Body of pancreas (tissue), 4 donors: ENCODE measurements at regions of chr19 and their contacts with region 1.

Region 1: GRCh38 chr19:4870025-4870700 is 2.7 kb upstream of the PLIN3 start:
- DNase-seq: peak; percentile 24 to 75 (median 40)
- ATAC-seq: no peak
- H3K4me3 ChIP-seq: no peak overlapping the region
- H3K27ac ChIP-seq: peak overlapping the region in 1 of 4 donors; percentile 2
- H3K4me1 ChIP-seq: peaks cover 9% of the 10 kb centered on the region
- H3K27me3 ChIP-seq: no peaks in the 10 kb centered on the region
- CTCF ChIP-seq: no peak
- POLR2A ChIP-seq: no peak

Region 2: DNA sequence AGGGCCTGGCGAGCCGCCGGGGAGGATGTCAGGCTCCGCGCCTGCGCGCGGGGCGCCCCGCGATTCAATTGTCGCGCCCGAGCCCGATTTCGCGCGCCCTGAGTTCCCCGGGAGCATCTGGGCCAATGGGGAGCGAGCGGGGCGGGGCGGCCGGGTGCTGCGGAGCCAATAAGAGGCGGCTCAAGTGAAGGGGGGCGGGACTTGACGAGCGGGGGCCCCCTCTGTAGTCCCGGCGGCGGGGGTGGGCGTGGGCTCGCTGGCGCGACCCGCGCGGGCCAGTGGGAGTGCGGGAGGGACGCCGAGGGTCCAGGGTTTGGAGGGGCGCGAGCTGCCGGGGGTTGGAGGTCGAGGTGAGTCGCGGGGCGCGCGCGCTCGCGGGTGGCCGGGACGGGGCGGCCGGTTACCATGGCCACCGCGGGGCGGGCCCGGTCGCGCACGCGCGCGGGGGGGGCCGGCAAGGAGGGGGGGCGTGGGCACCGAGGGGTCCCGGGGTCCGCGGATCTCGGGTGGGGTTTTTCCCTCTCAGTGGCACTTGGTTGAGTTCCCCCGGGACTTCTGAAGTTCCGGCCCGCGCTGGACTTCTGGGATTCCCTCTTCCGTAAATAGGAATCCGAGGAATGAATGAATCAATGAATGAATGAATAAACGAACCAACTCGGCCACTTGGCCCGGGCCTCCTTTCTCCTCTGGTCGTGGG is 39.9 kb after region 1 on chr19:
- intact Hi-C with region 1: loop called (anchors 5 kb)
- DNase-seq: peak; percentile 86 to 94 (median 90)
- ATAC-seq: peak; percentile 95
- H3K4me3 ChIP-seq: peak overlapping the region; percentile 36 to 73
- H3K27ac ChIP-seq: no peak overlapping the region
- H3K4me1 ChIP-seq: peaks cover 28% of the 10 kb centered on the region
- H3K27me3 ChIP-seq: peaks cover 0 to 4% of the 10 kb centered on the region in 2 donors
- CTCF ChIP-seq: no peak
- POLR2A ChIP-seq: no peak

Region 3: DNA sequence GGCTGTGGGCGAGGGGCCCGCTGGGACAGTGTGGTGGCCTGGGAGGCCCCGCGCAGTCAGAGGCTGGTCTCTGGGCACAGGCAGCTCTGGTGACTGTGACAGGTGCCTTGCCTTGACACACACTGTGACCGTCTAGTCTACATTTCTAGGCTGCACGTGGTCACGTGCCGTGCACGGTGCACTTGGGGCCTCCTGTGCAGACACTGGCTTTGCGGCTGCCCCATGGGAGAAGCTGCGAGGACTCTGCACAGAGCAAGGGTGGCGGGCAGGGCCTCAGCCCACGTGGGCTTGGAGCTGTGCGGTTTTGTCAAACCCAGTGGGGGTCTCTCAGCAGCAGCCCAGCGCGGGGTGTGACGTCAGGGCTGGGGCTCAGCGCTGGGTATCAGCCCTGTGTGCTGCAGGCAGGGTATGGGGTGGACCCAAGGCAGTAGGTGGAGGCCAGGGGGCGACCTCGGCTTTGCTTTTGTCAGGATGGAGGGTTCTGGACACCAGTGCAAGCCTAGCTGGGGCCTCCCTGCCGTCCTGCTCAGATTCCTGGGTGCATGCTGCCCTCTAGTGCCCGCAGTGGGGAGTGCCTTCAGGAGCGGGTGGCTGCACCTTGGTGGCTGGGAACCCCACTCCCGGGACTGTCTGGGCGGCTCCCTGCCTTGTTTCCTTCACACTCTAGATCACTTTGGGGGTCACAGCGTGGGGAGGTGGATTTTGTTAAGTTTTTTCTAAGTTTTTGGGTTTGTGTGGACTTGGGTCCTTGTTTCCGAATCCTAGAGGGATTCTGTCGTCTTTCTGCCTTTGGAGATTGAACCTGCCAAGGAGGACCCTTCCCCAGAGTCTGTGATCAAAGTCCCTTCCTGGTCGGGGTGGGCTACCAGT is 161.3 kb after region 1 on chr19:
- intact Hi-C with region 1: loop called (anchors 5 kb)
- DNase-seq: peak; percentile 82 to 87 (median 85)
- ATAC-seq: peak; percentile 87
- H3K4me3 ChIP-seq: no peak overlapping the region
- H3K27ac ChIP-seq: no peak overlapping the region
- H3K4me1 ChIP-seq: peaks cover 16% of the 10 kb centered on the region
- H3K27me3 ChIP-seq: no peaks in the 10 kb centered on the region
- CTCF ChIP-seq: peak; percentile 85 to 93 (median 90)
- POLR2A ChIP-seq: no peak